ENCODE measurements at regions of chr1 and their contacts with region 1.

Region 1: GRCh38 chr1:167059045-167059808 is 30.9 kb downstream of the GPA33 start:
- DNase-seq: peak; percentile 57 to 94
- H3K4me3 ChIP-seq: no peak overlapping the region
- CTCF ChIP-seq: peak in 1 of 3 donors; percentile 60
- POLR2A ChIP-seq: no peak

Region 2: GRCh38 chr1:166910396-166910994 is 148.7 kb before region 1 on chr1:
- intact Hi-C with region 1: loop called (anchors 10 kb)
- DNase-seq: peak in 1 of 2 donors; percentile 54
- H3K4me3 ChIP-seq: no peak overlapping the region
- CTCF ChIP-seq: no peak
- POLR2A ChIP-seq: no peak

Measured in lower leg skin (tissue), 4 donors.